Head of caudate nucleus (tissue), 42 donors: ENCODE measurements at regions of chr22 and their contacts with region 1.

Region 1: DNA sequence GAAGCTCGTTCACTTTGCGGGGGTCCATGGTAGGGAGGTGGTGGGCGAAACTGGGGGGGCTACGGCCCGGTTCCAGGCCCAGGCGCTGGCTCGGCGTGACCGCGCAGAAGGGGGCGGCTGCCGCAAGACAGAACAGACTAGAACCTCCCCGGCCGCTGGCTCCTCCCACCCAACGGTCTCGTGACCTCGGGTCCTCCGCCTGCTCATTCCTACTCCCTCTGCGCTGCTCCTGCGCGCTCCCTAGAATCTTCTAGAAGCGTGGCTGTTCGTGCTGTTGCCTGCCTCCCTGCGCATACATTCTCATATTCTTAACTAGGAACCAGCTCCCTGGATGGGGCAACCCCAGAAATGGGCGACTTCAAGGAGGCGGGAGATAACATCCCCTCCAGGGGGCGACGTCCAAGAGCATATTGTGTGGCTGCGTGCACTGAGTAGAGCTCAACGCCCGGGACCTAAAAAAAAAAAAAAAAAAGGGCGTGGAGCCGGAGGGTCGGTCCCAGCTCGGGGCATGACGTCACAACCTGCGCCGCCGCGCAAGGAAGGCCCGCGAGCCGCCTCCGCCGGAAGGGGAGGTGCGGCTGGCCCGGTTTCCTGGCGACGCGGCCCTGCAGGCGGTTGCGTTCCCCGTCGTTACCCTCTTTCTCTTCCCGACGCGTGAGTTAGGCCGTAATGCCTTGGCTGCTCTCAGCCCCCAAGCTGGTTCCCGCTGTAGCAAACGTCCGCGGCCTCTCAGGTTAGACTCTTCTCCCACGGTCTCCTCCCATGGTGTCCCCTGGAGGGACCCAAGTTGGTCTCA is at the starts of genes ST13 and XPNPEP3:
- DNase-seq: peak; percentile 92 to 98 (median 96)

Region 2: GRCh38 chr22:40818747-40819598 is 37.7 kb before region 1 on chr22 and contains the start of gene SLC25A17:
- intact Hi-C with region 1: loop called (anchors 2 kb)
- DNase-seq: peak; percentile 79 to 96 (median 92)

Region 3: DNA sequence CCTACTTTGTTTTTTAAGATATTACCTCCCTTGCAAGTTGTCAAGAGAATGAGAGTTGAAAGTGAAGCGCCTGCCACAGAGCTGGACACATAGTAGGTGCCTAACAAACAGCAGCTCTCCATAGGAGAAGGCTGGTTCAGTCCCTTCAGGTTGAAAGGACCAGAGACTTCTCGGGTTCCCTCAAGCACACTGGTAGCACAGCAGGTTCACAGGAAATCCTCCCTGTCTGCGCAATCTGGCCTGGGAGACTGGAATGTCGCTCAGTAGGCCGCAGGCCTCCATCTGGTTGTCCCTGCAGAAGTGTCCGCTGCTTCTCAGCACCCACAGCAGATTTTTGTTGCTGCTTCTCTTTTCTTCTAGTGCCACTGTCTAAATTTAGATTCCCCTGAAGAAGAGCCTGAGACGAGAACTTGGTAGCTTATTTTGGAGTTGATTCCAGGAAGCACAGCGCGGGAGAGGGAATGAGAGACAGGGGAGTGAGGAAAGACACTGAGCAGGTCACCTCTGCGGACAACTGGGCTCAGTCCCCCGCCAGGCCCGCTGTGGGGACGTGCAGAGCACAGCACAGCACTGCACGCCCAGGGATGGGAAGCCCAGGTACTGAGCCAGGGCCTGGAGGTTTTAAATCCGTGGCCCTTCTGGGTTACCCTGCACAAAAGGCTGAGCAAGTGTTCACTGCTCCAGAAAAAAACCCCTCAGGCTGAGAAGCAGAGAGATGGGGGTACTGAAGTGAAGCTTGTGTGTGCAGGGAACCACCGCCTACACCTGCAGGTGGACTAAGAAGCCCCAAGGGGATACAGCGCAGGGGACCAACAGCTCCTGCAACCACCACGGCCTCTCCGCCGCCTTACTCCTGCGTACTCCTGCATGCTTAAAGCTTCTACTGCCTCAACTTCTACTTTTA is 126.0 kb after region 1 on chr22:
- intact Hi-C with region 1: no loop called
- DNase-seq: peak in 1 of 42 donors; percentile 8